Posterior vena cava (tissue), 2 donors: ENCODE measurements at regions of chr1 and their contacts with region 1.

Region 1: DNA sequence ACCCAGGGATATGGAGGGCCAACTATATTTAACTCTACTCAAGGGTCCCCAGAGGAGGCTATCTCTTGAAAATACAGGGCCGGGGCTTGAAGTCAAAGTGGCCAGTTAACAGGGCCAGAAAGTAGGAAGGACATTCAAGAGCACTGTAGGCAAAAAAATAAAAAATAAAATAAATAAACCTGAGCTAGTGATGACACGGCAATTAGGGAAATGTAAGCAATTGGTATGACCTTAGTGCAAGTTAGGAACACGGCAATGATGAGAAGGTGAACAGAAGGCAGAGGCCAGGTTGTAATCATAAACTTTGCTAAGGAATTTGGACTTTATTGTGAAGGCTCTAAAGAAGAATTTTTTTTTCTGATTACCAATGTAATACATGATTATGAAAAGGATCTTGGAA is 3.4 kb upstream of the B3GALNT2 start:
- DNase-seq: no peak

Region 2: DNA sequence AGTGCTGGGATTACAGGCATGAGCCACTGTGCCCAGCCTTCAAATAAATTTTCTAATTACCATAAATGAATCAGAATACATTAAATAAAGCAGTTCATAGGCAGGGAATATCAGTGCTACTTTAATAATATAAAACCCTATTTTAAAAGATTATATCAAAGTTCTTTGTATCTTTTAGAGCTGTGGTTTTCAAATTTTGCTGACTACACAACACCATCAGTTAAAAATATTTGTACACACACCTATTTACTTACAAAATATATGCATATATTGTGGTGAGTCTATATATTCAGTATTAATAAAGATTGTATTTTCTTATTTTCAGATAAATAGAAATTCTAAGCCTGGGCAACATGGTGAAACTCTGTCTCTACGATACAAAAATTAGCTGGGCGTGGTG is 22.1 kb before region 1 on chr1:
- intact Hi-C with region 1: loop called in 1 of 2 experiments (anchors 2 kb)
- DNase-seq: no peak